ENCODE measurements at regions of chr4 and their contacts with region 1.

Region 1: GRCh38 chr4:87465739-87466366 is 43.5 kb downstream of the NUDT9 start:
- DNase-seq: peak; percentile 62
- H3K4me3 ChIP-seq: no peak overlapping the region
- H3K27ac ChIP-seq: no peak overlapping the region
- H3K4me1 ChIP-seq: peaks cover 9% of the 10 kb centered on the region
- CTCF ChIP-seq: peak; percentile 89

Region 2: GRCh38 chr4:87251106-87251505 is 214.7 kb before region 1 on chr4:
- CTCF ChIA-PET with region 1: no interaction called
- POLR2A ChIA-PET with region 1: no interaction called
- intact Hi-C with region 1: no loop called
- DNase-seq: no peak
- H3K4me3 ChIP-seq: no peak overlapping the region
- H3K27ac ChIP-seq: no peak overlapping the region
- H3K4me1 ChIP-seq: no peaks in the 10 kb centered on the region
- CTCF ChIP-seq: no peak

Region 3: DNA sequence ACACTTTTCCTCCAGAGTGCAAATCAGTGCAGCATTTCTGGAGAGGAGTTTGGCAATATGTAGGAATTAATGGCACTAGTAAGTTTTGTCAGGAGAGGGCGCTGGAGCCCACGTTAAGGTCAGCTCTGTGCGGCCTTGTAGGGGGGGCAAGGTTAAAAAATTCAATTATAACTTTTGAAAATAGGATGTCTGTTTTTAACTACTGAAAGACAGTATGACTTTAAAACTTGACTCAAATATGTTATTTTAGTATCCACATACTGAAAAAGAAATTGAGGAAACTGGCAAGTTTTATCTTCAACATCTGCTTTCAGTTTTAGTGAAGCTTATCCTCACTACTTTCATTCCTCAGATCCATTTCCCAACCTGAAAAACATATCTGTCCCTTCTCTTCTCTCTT is 112.3 kb before region 1 on chr4:
- CTCF ChIA-PET with region 1: no interaction called
- POLR2A ChIA-PET with region 1: no interaction called
- intact Hi-C with region 1: loop called (anchors 2 kb)
- DNase-seq: peak; percentile 50
- H3K4me3 ChIP-seq: no peak overlapping the region
- H3K27ac ChIP-seq: no peak overlapping the region
- H3K4me1 ChIP-seq: no peaks in the 10 kb centered on the region
- CTCF ChIP-seq: peak; percentile 95

Region 4: DNA sequence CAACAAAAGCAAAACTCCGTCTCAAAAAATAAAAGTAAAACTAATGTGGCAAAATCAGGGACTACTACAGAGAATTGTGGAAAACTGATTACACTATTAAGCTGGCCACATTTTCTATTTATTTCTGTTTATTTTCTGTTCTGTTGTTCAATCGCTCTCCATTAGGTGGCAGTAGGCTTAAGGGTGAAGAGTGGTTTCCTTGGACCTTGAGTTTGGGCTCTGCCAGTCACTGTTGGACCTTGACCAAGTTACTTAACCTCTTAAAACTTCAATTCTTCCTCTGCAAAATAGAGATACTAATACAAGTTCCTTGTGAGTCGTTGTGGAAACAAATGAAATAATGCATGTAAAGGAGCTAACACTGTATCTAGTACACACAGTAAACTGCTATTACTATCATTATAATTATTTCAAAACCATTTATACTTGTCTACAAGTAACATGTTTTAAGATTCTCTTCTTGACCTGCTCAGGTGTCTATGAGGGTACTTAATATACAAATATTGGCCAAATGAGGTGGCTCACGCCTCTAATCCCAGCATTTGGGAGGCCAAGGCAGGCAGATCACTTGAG is 90.0 kb before region 1 on chr4:
- CTCF ChIA-PET with region 1: interaction called, 3 read pairs
- POLR2A ChIA-PET with region 1: no interaction called
- intact Hi-C with region 1: loop called (anchors 1 kb)
- DNase-seq: peak; percentile 45
- H3K4me3 ChIP-seq: no peak overlapping the region
- H3K27ac ChIP-seq: no peak overlapping the region
- H3K4me1 ChIP-seq: no peaks in the 10 kb centered on the region
- CTCF ChIP-seq: peak; percentile 95

Region 5: GRCh38 chr4:88230969-88231771 is 765.3 kb after region 1 on chr4:
- CTCF ChIA-PET with region 1: no interaction called
- POLR2A ChIA-PET with region 1: no interaction called
- intact Hi-C with region 1: no loop called
- DNase-seq: no peak
- H3K4me3 ChIP-seq: no peak overlapping the region
- H3K27ac ChIP-seq: no peak overlapping the region
- H3K4me1 ChIP-seq: no peaks in the 10 kb centered on the region
- CTCF ChIP-seq: no peak

Measured in OCI-LY7 (cell line).